Endothelial cell of umbilical vein (primary cell): ENCODE measurements at regions of chr7 and their contacts with region 1.

Region 1: GRCh38 chr7:17844514-17845196 is 95.6 kb downstream of the SNX13 start:
- DNase-seq: no peak
- H3K4me3 ChIP-seq: no peak overlapping the region
- H3K27ac ChIP-seq: no peak overlapping the region
- H3K4me1 ChIP-seq: peaks cover 17% of the 10 kb centered on the region
- H3K27me3 ChIP-seq: no peaks in the 10 kb centered on the region
- CTCF ChIP-seq: no peak
- POLR2A ChIP-seq: no peak

Region 2: DNA sequence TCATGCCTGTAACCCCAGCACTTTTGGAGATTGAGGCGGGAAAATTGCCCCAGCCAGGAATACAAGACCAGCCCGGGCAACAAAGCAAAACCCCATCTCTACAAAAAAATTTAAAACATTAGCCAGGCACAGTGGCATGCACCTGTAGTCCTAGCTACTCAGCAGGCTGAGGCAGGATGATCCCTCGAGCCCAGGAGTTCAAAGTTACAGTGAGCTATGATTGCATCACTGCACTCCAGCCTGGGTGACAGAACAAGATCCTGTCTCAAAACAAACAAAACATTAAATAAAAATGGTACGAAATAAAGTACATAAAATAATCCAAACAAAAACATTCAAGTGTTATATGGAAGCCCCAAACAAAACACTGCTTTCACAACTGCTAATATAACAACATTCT is 29.3 kb before region 1 on chr7:
- CTCF ChIA-PET with region 1: no interaction called
- POLR2A ChIA-PET with region 1: no interaction called
- dilution Hi-C with region 1: no loop called
- intact Hi-C with region 1: no loop called
- DNase-seq: no peak
- H3K4me3 ChIP-seq: no peak overlapping the region
- H3K27ac ChIP-seq: no peak overlapping the region
- H3K4me1 ChIP-seq: no peaks in the 10 kb centered on the region
- H3K27me3 ChIP-seq: no peaks in the 10 kb centered on the region
- CTCF ChIP-seq: no peak
- POLR2A ChIP-seq: no peak

Region 3: GRCh38 chr7:18086165-18087030 is 241.7 kb after region 1 on chr7:
- CTCF ChIA-PET with region 1: no interaction called
- POLR2A ChIA-PET with region 1: no interaction called
- dilution Hi-C with region 1: no loop called
- intact Hi-C with region 1: loop called (anchors 5 kb)
- DNase-seq: peak; percentile 16
- H3K4me3 ChIP-seq: peak overlapping the region; percentile 39 to 88 (median 62)
- H3K27ac ChIP-seq: no peak overlapping the region
- H3K4me1 ChIP-seq: peaks cover 4% of the 10 kb centered on the region
- H3K27me3 ChIP-seq: no peaks in the 10 kb centered on the region
- CTCF ChIP-seq: peak; percentile 6 to 36
- POLR2A ChIP-seq: no peak

Region 4: GRCh38 chr7:18913106-18913505 is 1068.5 kb after region 1 on chr7:
- CTCF ChIA-PET with region 1: no interaction called
- POLR2A ChIA-PET with region 1: no interaction called
- dilution Hi-C with region 1: no loop called
- intact Hi-C with region 1: no loop called
- DNase-seq: no peak
- H3K4me3 ChIP-seq: no peak overlapping the region
- H3K27ac ChIP-seq: no peak overlapping the region
- H3K4me1 ChIP-seq: no peaks in the 10 kb centered on the region
- H3K27me3 ChIP-seq: no peaks in the 10 kb centered on the region
- CTCF ChIP-seq: no peak
- POLR2A ChIP-seq: no peak